SK-N-SH (cell line): ENCODE measurements at regions of chr1 and their contacts with region 1.

Region 1: DNA sequence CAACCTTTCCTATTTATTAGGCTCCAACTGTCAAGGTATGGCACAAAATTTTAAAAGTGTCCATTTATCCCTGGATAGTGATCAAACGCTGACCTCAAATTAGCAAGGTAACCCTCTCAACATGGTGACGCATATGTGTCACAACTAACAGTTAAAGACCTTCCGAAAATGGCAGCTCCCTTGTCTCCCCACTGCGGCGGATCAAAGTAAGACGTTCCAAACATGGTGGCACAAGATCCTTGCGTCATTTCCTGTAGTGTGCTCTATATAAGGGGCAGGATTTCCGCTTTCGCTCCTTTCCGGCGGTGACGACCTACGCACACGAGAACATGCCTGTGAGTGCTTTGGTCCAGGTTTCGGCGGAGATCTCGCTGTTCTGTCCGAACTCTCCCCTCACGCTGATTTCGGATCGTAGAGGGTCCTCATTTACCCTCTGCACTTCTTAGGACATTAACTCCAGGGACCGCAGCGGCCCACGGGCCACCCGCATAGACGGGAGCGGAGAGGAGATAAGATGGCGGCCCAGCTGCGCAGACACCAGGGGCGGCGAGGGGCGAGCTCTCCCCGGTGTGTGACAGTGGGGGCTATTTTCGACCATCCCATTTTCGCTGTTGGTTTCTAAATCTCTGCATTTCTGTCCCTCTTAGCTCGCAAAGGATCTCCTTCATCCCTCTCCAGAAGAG is at the start of gene RPS27:
- DNase-seq: peak; percentile 90
- H3K4me3 ChIP-seq: peak within 1 kb of the TSS; percentile 82 to 85
- H3K27ac ChIP-seq: peak within 1 kb of the TSS; percentile 79 to 92
- H3K4me1 ChIP-seq: peaks cover 19 to 21% of the 10 kb centered on the region in 2 experiments; a peak in 3 of 4 replicates
- H3K27me3 ChIP-seq: no peaks in the 10 kb centered on the region
- CTCF ChIP-seq: no peak
- EP300 ChIP-seq: no peak
- RAD21 ChIP-seq: no peak
- polyA plus RNA-seq, gene RPS27: 7,060 and 7,825 TPM in 2 replicates

Region 2: DNA sequence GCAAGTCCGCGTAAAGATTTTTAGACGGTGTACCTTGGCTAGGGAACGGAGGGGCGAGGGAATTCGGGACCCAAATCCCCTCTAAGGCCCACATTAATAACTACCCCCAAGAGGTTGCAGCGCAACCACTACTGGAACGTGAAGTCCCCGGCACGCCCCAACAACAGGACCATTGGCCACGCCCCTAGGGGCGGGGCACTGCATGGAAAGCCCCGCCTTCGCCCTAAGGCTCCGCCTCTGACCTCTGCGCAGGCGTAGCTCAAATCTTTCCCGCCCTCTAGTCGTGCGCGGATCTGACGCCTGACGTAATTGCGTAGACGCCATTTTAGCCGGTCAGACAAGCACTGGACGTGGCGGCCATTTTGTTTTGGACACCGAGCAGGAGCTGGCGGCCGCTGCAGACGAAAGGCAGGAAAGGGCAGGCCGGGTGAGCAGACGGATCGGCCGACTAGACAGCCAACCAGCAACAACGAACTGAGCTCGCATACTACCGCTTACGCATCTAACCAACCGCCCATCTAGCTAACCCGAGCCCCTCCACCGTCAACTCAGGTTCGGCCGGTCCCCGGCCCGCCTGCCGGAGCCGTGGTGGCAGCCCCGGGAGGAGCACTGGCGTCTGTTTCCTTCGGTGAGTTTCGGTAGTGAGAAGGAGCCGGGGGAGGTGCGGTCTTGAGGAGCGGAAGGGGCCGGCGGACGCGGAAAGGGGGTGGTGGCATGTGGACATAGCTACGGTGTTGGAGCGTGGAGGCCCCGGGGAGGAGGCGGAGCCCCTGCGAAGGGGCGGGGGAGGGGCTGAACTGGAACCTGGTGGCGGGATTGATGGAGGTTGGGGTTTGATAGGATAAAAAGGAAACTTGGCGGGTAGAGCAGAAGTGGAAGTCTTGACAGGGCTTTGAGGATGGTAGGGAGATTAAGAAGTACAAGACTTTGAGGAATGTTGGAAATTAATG is 356.6 kb before region 1 on chr1 and contains the start of gene CHTOP:
- CTCF ChIA-PET with region 1: interaction called, 3 read pairs
- POLR2A ChIA-PET with region 1: interaction called, 10 read pairs
- DNase-seq: peak; percentile 94
- H3K4me3 ChIP-seq: peak within 1 kb of the TSS; percentile 91 to 97
- H3K27ac ChIP-seq: peak within 1 kb of the TSS; percentile 100
- H3K4me1 ChIP-seq: no peaks in the 10 kb centered on the region; a peak in 1 of 4 replicates
- H3K27me3 ChIP-seq: no peaks in the 10 kb centered on the region
- CTCF ChIP-seq: no peak
- EP300 ChIP-seq: no peak
- RAD21 ChIP-seq: no peak
- polyA plus RNA-seq, gene CHTOP: 76.7 and 84.9 TPM in 2 replicates

Region 3: GRCh38 chr1:153783233-153784190 is 207.1 kb before region 1 on chr1:
- CTCF ChIA-PET with region 1: interaction called, 11 read pairs
- POLR2A ChIA-PET with region 1: interaction called, 18 read pairs
- DNase-seq: peak; percentile 99
- H3K4me3 ChIP-seq: peak overlapping the region; percentile 61 to 75
- H3K27ac ChIP-seq: peak overlapping the region; percentile 85 to 94
- H3K4me1 ChIP-seq: peaks cover 4% of the 10 kb centered on the region in 2 experiments; a peak in 2 of 4 replicates
- H3K27me3 ChIP-seq: no peaks in the 10 kb centered on the region
- CTCF ChIP-seq: no peak
- EP300 ChIP-seq: peak in 1 of 2 experiments; percentile 31; a peak in 1 of 4 replicates
- RAD21 ChIP-seq: no peak

Region 4: DNA sequence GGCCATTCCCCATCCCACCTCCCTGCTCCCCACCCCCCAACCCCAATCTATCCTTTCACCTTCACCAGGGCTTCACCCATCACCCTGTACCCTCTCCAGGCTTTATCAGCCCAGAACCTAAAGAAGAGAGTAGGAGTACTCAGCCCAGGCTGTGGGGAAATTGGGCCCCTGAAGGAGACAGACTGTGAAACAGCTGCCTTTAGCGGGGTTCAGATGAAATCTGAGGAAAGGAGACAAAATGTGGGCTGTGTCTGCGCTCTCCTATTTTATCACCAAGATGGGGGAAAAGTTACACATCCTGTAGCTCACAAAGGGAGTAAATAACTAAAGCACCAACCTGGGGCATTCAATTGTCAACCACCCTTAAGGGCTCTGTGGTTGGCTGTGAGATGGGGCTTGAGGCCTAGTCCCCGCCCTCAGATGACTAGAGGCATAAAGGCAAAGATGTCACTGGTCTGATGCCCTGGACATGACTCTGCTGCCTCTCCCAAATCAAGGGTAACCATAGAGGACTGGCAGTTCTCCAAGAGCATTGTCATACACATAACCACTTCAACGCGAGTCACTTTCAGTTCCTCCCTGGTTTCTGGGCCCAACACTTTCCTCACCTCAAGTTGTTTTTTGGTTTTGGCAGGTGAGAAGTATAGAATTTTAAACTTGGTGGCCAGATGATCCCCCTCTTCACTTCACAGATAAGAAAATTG is 185.4 kb before region 1 on chr1:
- CTCF ChIA-PET with region 1: interaction called, 26 read pairs
- POLR2A ChIA-PET with region 1: interaction called, 5 read pairs
- DNase-seq: no peak
- H3K4me3 ChIP-seq: no peak overlapping the region
- H3K27ac ChIP-seq: peak overlapping the region in 1 of 2 experiments; percentile 57; a peak in 2 of 4 replicates
- H3K4me1 ChIP-seq: peaks cover 5 to 8% of the 10 kb centered on the region in 2 experiments; a peak in 2 of 4 replicates
- H3K27me3 ChIP-seq: no peaks in the 10 kb centered on the region
- CTCF ChIP-seq: no peak
- EP300 ChIP-seq: no peak
- RAD21 ChIP-seq: no peak

Region 5: GRCh38 chr1:153922972-153923925 is 67.4 kb before region 1 on chr1 and contains the start of gene GATAD2B:
- CTCF ChIA-PET with region 1: interaction called, 14 read pairs
- POLR2A ChIA-PET with region 1: interaction called, 8 read pairs
- DNase-seq: peak; percentile 96
- H3K4me3 ChIP-seq: peak within 1 kb of the TSS; percentile 74 to 90
- H3K27ac ChIP-seq: peak within 1 kb of the TSS; percentile 85 to 95
- H3K4me1 ChIP-seq: peaks cover 17 to 25% of the 10 kb centered on the region in 2 experiments
- H3K27me3 ChIP-seq: no peaks in the 10 kb centered on the region
- CTCF ChIP-seq: no peak
- EP300 ChIP-seq: 0 out of 4 replicates have a peak, but pooled peaks of 1 of the 2 experiments have one; percentile 20
- RAD21 ChIP-seq: peak; percentile 41
- polyA plus RNA-seq, gene GATAD2B: 2.7 and 2.8 TPM in 2 replicates

Region 6: DNA sequence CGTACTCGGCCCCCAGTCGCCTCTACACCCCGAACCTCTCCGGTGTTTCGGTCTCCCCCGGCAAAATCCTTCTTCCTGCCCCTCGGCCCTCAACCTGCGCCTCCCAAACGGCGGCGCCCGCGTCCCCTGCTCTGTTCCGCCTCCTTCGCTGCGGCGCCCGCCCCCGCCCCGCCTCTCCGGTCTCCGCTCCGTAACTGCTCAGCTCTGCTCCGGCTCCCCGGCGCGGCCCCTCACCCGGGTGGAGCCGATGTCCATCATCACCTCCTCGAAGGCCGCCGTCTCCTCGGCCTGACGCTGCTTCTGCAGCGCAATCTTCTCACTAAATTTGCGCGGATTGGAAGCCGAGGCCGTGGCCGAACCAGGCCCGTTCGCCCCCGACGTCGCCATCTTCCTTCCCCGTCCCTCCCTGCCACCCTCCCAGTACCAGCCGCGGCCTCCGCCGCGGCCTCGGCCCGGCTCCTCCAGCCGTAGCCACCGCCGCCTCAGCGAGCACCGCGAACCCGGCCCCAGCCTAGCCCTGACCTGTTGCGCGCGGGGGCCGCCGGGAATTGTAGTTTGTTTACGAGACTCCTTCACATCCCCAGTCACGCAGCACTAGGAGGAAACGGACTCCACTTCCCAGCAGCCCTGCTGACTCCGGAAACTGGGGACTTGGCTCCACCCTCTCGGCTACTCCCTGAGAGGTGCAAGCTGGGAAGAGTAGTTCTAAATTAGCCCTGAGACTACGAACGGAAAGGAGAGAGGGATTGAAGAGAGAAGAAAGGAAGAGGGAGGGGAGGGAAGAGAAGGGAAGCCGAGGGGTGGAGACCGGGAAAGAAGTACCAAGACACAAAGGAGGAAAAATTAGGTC is 32.3 kb before region 1 on chr1 and contains the start of gene CRTC2:
- CTCF ChIA-PET with region 1: interaction called, 50 read pairs
- POLR2A ChIA-PET with region 1: interaction called, 20 read pairs
- DNase-seq: peak; percentile 97
- H3K4me3 ChIP-seq: peak within 1 kb of the TSS; percentile 69 to 95
- H3K27ac ChIP-seq: peak within 1 kb of the TSS; percentile 88 to 96
- H3K4me1 ChIP-seq: peaks cover 5 to 53% of the 10 kb centered on the region in 2 experiments; a peak in 3 of 4 replicates
- H3K27me3 ChIP-seq: no peaks in the 10 kb centered on the region
- CTCF ChIP-seq: 0 out of 2 replicates have a peak, but pooled peaks have one; percentile 15
- EP300 ChIP-seq: no peak
- RAD21 ChIP-seq: no peak
- polyA plus RNA-seq, gene CRTC2: 25.5 and 26.2 TPM in 2 replicates

Region 7: DNA sequence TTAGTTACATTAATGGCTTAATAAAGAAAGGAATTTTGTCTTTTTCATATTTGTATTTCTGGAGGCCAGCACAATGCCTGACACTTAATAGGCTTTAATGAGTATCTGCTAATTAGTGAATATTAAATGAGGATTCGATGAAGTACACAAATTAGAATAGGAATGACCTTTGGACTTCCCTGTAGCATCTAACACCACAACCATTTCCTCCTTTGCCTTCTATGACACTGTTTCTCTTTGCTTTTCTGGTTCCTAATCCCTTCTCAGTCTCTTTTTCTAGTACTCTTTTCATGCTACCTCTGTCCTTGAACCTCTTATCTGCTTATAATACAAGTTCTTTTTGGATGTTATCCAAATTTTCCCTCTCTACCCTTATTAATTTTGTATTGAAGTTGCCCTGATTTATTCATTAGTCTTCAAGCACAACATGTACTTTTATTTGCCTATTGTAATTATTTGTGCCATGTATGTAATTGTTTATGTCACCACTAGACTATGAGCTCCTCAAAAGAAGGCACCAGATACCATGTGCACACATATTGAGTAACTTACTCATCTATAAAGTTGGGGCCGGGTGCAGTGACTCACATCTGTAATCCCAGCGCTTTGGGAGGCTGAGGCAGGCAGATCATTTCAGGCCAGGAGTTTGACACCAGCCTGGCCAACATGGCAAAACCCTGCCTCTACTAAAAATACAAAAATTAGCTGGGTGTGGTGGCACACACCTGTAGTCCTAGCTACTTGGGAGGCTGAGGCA is 23.7 kb after region 1 on chr1:
- CTCF ChIA-PET with region 1: no interaction called
- POLR2A ChIA-PET with region 1: no interaction called
- DNase-seq: no peak
- H3K4me3 ChIP-seq: no peak overlapping the region
- H3K27ac ChIP-seq: no peak overlapping the region
- H3K4me1 ChIP-seq: no peaks in the 10 kb centered on the region
- H3K27me3 ChIP-seq: no peaks in the 10 kb centered on the region
- CTCF ChIP-seq: no peak
- EP300 ChIP-seq: no peak
- RAD21 ChIP-seq: no peak

Region 8: GRCh38 chr1:154335025-154335714 is 344.6 kb after region 1 on chr1:
- CTCF ChIA-PET with region 1: no interaction called
- POLR2A ChIA-PET with region 1: no interaction called
- DNase-seq: peak; percentile 88
- H3K4me3 ChIP-seq: peak overlapping the region in 1 of 2 experiments; percentile 10; a peak in 1 of 4 replicates
- H3K27ac ChIP-seq: peak overlapping the region; percentile 25 to 47; a peak in 3 of 4 replicates
- H3K4me1 ChIP-seq: peaks cover 0 to 7% of the 10 kb centered on the region in 2 experiments; a peak in 2 of 4 replicates
- H3K27me3 ChIP-seq: no peaks in the 10 kb centered on the region
- CTCF ChIP-seq: peak; percentile 92
- EP300 ChIP-seq: no peak
- RAD21 ChIP-seq: peak; percentile 77